ENCODE measurements at regions of chr20 and their contacts with region 1.

Region 1: DNA sequence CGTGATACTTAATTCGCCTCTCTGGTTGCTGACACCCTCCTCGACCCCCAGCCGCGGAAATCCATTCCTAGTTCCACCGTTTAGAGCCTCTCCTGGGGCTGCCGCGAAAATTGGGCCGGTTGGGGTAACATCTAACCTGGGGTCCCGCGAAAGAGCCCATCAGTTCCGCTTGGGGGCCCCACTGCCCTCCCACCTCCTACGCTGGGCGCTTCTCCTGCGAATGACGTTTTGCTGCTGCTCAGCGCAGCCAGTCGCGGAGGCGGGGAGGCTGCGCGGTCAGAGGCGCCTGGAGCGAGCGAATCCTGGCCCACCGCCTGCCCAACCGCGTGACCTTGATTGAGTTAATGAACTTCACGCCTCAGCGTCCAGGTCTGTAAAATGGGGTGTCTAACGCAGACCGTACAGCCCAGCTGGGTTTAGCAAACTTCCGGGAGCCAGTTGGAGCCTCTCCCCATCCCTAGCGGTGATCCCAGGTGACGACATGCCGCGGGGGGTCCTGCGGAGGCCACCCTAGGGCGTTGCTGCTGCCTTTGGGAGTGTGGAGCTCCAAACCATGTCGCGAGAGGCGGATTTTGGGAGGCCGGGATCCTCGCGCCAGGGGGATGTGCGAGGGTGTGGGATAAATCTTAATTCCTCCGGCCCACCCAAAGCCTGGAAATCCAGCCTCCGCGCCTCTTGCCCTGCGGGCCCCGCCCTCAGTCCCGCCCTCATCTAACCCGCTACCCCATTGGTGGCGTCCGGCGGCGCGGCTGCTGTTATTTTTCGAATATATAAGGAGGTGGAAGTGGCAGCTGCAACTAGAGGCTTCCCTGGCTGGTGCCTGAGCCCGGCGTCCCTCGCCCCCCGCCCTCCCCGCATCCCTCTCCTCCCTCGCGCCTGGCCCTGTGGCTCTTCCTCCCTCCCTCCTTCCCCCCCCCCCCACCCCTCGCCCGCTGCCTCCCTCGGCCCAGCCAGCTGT is at the start of gene CDC25B:
- DNase-seq: peak; percentile 96
- H3K4me3 ChIP-seq: peak within 1 kb of the TSS; percentile 72 to 80
- H3K27ac ChIP-seq: peak within 1 kb of the TSS; percentile 91 to 96
- H3K4me1 ChIP-seq: peaks cover 17 to 41% of the 10 kb centered on the region in 2 experiments; a peak in 3 of 4 replicates
- H3K27me3 ChIP-seq: no peaks in the 10 kb centered on the region
- CTCF ChIP-seq: peak; percentile 50
- EP300 ChIP-seq: no peak
- RAD21 ChIP-seq: peak; percentile 43
- polyA plus RNA-seq, gene CDC25B: 41.5 and 56.5 TPM in 2 replicates

Region 2: DNA sequence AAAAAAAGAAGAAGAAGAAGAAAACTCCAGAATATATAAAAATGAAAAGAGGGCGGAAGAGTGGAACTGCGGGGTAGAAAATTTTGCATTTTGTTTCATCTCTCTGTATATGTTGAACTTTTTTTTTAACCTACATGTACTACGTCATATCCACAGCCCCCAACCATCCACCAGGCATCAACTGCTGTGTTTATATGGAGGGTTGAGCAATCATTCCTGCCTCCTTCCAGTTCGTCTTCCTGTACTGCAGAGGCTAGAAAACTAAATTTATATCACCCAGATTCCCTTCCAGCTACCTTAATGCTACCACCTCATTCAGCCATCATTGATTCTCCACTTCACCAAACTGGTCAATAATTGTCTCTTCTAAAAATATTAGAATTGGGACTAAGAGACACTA is 73.9 kb before region 1 on chr20:
- CTCF ChIA-PET with region 1: no interaction called
- POLR2A ChIA-PET with region 1: no interaction called
- DNase-seq: no peak
- H3K4me3 ChIP-seq: no peak overlapping the region
- H3K27ac ChIP-seq: no peak overlapping the region
- H3K4me1 ChIP-seq: no peaks in the 10 kb centered on the region
- H3K27me3 ChIP-seq: peaks cover 21% of the 10 kb centered on the region; the same call in 1 of the 2 replicates
- CTCF ChIP-seq: no peak
- EP300 ChIP-seq: no peak
- RAD21 ChIP-seq: no peak

Region 3: GRCh38 chr20:3811467-3812258 is 15.9 kb after region 1 on chr20:
- CTCF ChIA-PET with region 1: interaction called, 11 read pairs
- POLR2A ChIA-PET with region 1: interaction called, 3 read pairs
- DNase-seq: peak; percentile 93
- H3K4me3 ChIP-seq: peak overlapping the region; percentile 41 to 56
- H3K27ac ChIP-seq: peak overlapping the region; percentile 97 to 98
- H3K4me1 ChIP-seq: peaks cover 26 to 37% of the 10 kb centered on the region in 2 experiments
- H3K27me3 ChIP-seq: no peaks in the 10 kb centered on the region
- CTCF ChIP-seq: no peak
- EP300 ChIP-seq: peak; percentile 92 to 98
- RAD21 ChIP-seq: no peak